ENCODE measurements at regions of chr19 and their contacts with region 1.

Region 1: DNA sequence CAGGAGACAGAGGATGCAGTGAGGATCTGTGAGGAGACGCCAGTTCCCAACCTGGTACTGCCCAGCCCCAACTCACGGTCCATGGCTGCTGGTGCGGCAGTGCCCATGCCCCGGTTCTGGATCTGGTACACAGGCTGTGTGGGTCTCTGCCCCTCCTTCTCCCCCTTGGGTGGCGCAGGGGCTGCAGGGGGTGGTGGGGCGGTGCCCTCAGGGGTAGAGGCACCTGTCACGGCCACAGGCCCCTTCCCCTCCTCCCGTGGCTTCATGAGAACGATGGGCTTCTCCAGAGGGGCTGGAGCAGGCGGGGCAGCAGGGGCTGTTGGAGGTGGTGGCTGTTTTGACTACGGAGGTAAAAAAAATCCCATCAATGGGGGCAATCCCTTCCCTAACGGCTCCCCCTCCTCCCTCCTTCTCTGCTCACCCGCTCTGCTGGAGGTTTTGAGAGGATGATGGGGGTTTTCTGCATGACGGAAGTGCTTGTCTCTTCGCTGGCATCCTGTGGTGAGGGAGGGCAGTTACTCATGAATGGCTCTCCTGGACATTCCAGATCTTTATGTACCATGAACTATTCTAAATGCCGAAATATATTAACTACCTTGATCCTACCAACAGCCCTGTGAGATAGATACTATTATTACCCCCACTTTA is 7.1 kb downstream of the SMG9 start:
- DNase-seq: peak; percentile 69
- CTCF ChIP-seq: no peak

Region 2: DNA sequence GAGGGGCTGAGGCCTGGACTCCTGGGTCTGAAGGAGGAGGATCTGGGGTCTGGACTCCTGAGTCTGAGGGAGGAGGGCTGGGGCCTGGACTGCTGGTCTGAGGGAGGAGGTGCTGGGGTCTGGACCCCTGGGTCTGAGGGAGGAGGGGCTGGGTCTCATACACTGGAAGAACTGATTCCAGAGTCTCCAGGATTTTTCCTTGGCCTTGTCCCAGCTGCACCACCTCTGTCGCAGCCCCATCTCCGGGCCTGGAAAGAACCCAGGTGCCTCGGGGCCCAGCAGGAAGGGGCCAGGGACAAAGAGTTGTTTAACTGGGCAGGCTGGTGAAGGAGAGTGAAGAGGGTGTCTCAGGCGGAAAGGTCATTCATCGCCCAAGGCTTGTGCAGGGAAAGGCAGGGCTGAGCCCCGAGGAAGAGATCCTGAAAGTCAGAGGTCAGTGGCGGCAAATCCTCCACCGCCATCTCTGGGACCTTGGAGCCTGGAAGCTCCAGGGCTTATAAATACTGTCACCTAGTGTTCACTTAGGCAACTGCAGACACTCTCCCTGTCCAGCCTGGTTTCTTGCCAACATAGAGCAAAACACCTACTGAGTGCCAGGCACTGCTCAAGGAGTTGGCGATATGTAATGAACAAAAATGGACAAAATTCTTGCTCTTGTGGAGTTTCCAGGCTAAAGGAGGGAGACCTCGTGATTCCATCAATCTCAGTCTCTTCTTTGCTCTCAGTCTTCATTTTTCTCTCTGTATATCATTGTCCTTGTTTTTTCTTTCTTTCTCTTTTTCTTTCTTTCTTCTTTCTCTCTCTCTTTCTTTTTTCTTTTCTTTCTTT is 37.5 kb after region 1 on chr19:
- in situ Hi-C with region 1: loop called (anchors 5 kb)
- DNase-seq: peak; percentile 73
- CTCF ChIP-seq: peak; percentile 96

Measured in GM13976 (cell line).